ENCODE measurements at regions of chr10 and their contacts with region 1.

Region 1: DNA sequence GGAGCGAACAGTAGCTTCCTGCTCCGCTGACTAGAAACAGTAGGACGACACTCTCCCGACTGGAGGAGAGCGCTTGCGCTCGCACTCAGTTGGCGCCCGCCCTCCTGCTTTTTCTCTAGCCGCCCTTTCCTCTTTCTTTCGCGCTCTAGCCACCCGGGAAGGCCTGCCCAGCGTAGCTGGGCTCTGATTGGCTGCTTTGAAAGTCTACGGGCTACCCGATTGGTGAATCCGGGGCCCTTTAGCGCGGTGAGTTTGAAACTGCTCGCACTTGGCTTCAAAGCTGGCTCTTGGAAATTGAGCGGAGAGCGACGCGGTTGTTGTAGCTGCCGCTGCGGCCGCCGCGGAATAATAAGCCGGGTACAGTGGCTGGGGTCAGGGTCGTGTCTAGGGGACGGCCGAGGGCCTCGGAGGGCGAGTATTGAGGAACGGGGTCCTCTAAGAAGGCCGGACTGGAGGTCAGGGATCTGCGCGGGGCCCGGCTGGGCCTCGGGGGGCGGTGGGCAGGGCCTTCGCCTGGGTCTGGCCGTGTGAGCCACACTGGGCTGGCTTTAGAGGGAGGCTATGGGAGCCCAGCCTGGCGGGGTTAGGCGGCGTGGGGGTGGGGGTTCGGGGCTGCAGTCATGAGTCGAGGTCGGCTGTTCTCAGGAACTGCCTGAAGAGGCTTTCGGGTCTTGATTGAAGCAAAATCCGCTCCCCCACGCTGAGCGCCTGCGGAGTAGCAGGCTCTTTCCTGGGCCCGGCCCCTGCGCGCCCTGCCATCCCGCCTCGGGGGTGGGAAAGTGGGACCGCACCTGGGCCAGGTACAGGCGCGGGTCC is at the start of gene CDK1:
- DNase-seq: peak; percentile 100
- H3K4me3 ChIP-seq: peak within 1 kb of the TSS; percentile 86
- H3K27ac ChIP-seq: peak within 1 kb of the TSS; percentile 94
- H3K4me1 ChIP-seq: peaks cover 24% of the 10 kb centered on the region
- H3K27me3 ChIP-seq: no peaks in the 10 kb centered on the region
- CTCF ChIP-seq: no peak
- total RNA-seq, gene CDK1: 153 and 168 TPM in 2 replicates

Region 2: DNA sequence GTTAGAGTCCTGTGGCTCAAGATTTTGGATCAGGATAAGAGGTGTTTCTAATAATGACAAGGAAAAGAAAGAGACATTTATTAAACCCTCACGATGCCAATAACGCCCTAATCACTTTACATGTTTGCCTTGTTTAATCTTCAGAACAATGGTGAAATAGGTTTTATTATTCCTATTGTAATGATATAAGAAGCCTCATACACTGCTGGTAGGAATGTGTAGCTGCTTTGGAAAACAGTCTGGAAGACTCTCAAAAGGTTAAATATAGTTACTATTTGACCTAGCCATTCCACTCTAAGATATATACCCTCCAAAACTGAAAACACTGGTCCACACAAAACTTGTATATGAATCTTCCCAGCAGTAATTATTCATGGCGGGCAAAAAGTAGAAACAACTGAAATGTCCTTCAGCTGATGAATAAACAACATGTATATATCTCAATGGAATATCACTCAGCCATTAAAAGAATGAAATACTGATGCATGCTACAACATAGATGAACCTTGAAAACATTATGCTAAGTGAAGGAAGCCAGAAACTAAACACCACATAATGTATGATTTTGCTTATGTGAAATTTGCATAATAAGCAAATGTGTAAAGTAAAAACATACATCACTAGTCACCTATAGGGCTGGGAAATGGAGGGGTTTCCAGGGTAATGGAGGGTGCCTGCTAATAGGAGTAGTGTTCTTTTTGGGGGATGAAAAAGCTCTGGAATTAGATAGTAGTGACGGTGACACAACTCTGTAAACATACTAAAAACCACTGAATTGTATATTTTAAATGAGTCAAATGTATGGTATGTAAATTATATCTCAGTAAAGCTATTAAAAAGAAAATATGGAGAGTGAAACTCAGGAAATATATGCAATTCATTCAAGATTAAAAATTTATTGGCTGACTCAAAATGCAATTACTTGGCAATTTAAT is 311.9 kb before region 1 on chr10:
- CTCF ChIA-PET with region 1: no interaction called
- POLR2A ChIA-PET with region 1: no interaction called
- intact Hi-C with region 1: no loop called
- DNase-seq: peak; percentile 26
- H3K4me3 ChIP-seq: no peak overlapping the region
- H3K27ac ChIP-seq: no peak overlapping the region
- H3K4me1 ChIP-seq: peaks cover 35% of the 10 kb centered on the region
- H3K27me3 ChIP-seq: no peaks in the 10 kb centered on the region
- CTCF ChIP-seq: peak; percentile 17; the same call in 1 of the 2 replicates

Region 3: GRCh38 chr10:60549686-60550085 is 228.7 kb before region 1 on chr10:
- CTCF ChIA-PET with region 1: no interaction called
- POLR2A ChIA-PET with region 1: no interaction called
- intact Hi-C with region 1: loop called (anchors 10 kb)
- DNase-seq: peak; percentile 51
- H3K4me3 ChIP-seq: no peak overlapping the region
- H3K27ac ChIP-seq: no peak overlapping the region
- H3K4me1 ChIP-seq: no peaks in the 10 kb centered on the region
- H3K27me3 ChIP-seq: no peaks in the 10 kb centered on the region
- CTCF ChIP-seq: peak; percentile 60

Region 4: GRCh38 chr10:61364619-61365018 is 586.2 kb after region 1 on chr10:
- CTCF ChIA-PET with region 1: no interaction called
- POLR2A ChIA-PET with region 1: no interaction called
- intact Hi-C with region 1: no loop called
- DNase-seq: no peak
- H3K4me3 ChIP-seq: no peak overlapping the region
- H3K27ac ChIP-seq: no peak overlapping the region
- H3K4me1 ChIP-seq: no peaks in the 10 kb centered on the region
- H3K27me3 ChIP-seq: no peaks in the 10 kb centered on the region
- CTCF ChIP-seq: no peak

Measured in A673 (cell line).